ENCODE measurements at regions of chr14 and their contacts with region 1.

Region 1: DNA sequence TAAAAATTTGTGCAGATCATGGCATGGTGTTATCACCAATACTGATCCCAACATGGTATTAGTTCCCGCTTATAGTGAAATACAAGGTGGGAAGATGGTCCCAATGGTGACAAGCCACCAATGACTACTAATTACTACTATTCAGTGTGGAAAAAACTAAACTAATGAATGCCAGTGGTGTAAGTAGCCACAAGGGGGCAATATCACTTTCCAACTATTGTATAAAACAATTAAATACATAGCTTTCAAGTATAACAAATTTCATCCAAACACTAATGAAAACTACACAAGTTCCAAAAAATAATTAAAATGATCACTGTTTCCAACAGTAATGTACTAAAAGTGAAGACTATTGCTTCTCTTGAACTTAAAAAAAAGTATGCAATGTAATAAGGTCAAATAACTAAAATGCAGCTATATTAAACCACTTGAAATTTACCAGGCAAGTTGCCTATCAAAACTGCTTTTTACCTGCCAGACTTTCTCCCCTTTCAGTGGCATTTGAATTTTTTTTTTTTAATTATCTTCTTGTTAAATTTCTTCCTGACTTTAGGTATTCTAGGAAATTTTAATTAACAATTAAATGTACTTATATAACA is 58.0 kb downstream of the PAPLN start:
- DNase-seq: no peak
- H3K4me3 Mint-ChIP-seq: no peak overlapping the region
- H3K27ac Mint-ChIP-seq: no peak overlapping the region
- H3K4me1 Mint-ChIP-seq: peaks cover 12% of the 10 kb centered on the region
- H3K27me3 Mint-ChIP-seq: no peaks in the 10 kb centered on the region

Region 2: GRCh38 chr14:73463411-73463810 is 168.1 kb after region 1 on chr14:
- CTCF ChIA-PET with region 1: interaction called, 135 read pairs
- intact Hi-C with region 1: loop called (anchors 1 kb)
- DNase-seq: peak; percentile 72
- H3K4me3 Mint-ChIP-seq: peak overlapping the region; percentile 32
- H3K27ac Mint-ChIP-seq: peak overlapping the region; percentile 52
- H3K4me1 Mint-ChIP-seq: peaks cover 52% of the 10 kb centered on the region
- H3K27me3 Mint-ChIP-seq: no peaks in the 10 kb centered on the region

Region 3: GRCh38 chr14:73472185-73473114 is 177.2 kb after region 1 on chr14:
- CTCF ChIA-PET with region 1: interaction called, 135 read pairs
- intact Hi-C with region 1: loop called (anchors 1 kb)
- DNase-seq: no peak
- H3K4me3 Mint-ChIP-seq: no peak overlapping the region
- H3K27ac Mint-ChIP-seq: no peak overlapping the region
- H3K4me1 Mint-ChIP-seq: peaks cover 9% of the 10 kb centered on the region
- H3K27me3 Mint-ChIP-seq: no peaks in the 10 kb centered on the region

Region 4: DNA sequence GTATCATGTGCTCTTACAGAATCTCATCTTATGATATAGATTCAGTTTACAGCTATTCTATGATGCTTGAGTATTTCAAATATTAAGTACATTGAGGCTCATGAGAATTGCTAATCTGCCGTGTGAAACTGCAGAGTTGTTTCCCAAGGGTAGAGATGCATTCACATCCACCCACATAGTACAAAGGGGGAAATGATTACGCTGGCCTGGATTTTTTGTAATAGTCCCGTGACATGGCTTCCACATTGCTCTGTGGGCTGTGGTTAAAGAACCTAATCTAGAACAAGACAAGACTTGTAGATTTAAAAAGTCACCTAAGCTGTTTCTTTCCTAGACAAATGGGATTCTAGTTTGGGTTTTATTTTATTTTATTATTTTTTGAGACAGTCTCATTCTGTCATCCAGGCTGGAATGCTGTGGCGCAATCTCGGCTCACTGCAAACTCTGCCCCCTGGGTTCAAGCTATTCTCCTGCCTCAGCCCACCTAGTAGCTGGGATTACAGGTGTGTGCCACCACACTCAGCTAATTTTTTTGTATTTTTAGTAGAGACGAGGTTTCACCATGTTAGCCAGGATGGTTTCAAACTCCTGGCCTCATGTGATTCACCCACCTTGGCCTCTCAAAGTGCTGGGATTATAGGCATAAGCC is 182.4 kb after region 1 on chr14:
- CTCF ChIA-PET with region 1: interaction called, 135 read pairs
- intact Hi-C with region 1: loop called (anchors 1 kb)
- DNase-seq: no peak
- H3K4me3 Mint-ChIP-seq: no peak overlapping the region
- H3K27ac Mint-ChIP-seq: no peak overlapping the region
- H3K4me1 Mint-ChIP-seq: no peaks in the 10 kb centered on the region
- H3K27me3 Mint-ChIP-seq: no peaks in the 10 kb centered on the region